ENCODE measurements at regions of chr7 and their contacts with region 1.

Region 1: GRCh38 chr7:123719197-123719721 is 29.5 kb downstream of the WASL start:
- DNase-seq: no peak
- H3K4me3 ChIP-seq: no peak overlapping the region
- H3K27ac ChIP-seq: no peak overlapping the region
- H3K4me1 ChIP-seq: peaks cover 0 to 5% (median 2%) of the 10 kb centered on the region in 4 experiments; a peak in 2 of 7 replicates
- H3K27me3 ChIP-seq: no peaks in the 10 kb centered on the region
- CTCF ChIP-seq: no peak
- EP300 ChIP-seq: no peak
- POLR2A ChIP-seq: no peak
- RAD21 ChIP-seq: no peak

Region 2: DNA sequence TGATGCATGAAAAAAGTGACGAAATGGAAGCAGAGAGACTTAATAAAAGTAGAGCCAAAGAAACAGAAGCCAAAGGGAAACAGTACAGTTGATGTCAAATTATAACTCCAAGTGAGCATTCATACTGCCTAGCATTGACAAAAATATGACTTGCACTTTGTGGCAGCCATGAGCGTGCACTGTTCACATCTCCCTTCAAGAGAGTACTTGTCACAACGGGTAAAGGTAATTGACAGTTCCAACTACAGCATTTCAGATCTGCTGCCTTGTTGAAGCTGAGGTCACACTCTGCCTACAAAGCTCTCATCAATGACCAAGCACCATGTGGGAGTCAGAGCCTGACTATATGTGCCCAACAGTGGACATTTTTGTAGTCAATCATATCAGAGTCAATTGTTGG is 239.2 kb before region 1 on chr7:
- CTCF ChIA-PET with region 1: no interaction called
- POLR2A ChIA-PET with region 1: no interaction called
- DNase-seq: no peak
- H3K4me3 ChIP-seq: no peak overlapping the region
- H3K27ac ChIP-seq: no peak overlapping the region
- H3K4me1 ChIP-seq: no peaks in the 10 kb centered on the region
- H3K27me3 ChIP-seq: peaks cover 0 to 1% (median 0%) of the 10 kb centered on the region in 4 experiments; a peak in 1 of 7 replicates
- CTCF ChIP-seq: no peak
- EP300 ChIP-seq: no peak
- POLR2A ChIP-seq: no peak
- RAD21 ChIP-seq: no peak

Region 3: GRCh38 chr7:123655614-123656013 is 63.6 kb before region 1 on chr7 and contains the start of gene LMOD2:
- CTCF ChIA-PET with region 1: no interaction called
- POLR2A ChIA-PET with region 1: no interaction called
- DNase-seq: no peak
- H3K4me3 ChIP-seq: no peak within 1 kb of the TSS
- H3K27ac ChIP-seq: no peak within 1 kb of the TSS
- H3K4me1 ChIP-seq: no peaks in the 10 kb centered on the region
- H3K27me3 ChIP-seq: no peaks in the 10 kb centered on the region
- CTCF ChIP-seq: no peak
- EP300 ChIP-seq: no peak
- POLR2A ChIP-seq: no peak
- RAD21 ChIP-seq: no peak
- total RNA-seq, gene LMOD2: 0.22 TPM in 1 of 2 replicates, not detected in the other

Region 4: DNA sequence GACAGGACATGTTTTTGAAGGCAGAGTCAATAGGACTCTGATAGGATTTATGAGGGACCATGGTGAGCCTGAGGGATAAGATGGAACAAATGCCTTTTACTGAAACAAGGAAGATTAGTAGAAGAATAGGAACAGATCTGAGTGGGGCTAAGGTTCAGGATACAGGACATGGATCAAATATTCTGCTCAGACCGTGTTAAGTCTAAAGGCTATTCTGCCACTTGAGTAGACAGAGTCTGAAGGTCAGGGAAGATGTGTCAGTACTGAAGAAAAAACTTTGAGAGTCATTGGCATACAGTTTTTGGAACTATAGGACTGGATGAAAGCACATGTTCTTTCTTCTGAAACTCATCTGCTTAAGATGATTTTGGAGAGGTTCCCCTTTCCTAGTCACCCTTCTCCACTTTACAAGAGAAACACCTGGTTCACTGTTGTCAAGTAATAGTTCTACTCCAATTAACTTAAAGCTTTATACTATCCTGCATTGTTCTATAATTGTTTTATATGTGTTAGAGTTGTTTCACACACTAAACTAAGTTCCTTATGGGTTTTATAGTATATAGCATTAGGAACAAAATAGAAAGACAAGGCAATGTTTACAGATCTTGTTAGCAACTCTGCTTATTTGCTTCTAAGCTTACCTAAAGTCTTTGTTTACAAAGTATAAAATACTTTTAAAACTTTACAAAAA is 13.9 kb before region 1 on chr7:
- CTCF ChIA-PET with region 1: interaction called, 12 read pairs
- POLR2A ChIA-PET with region 1: no interaction called
- DNase-seq: no peak
- H3K4me3 ChIP-seq: no peak overlapping the region
- H3K27ac ChIP-seq: no peak overlapping the region
- H3K4me1 ChIP-seq: no peaks in the 10 kb centered on the region; a peak in 1 of 7 replicates
- H3K27me3 ChIP-seq: no peaks in the 10 kb centered on the region
- CTCF ChIP-seq: no peak
- EP300 ChIP-seq: no peak
- POLR2A ChIP-seq: no peak
- RAD21 ChIP-seq: no peak

Region 5: GRCh38 chr7:123734498-123734897 is 15.2 kb after region 1 on chr7:
- CTCF ChIA-PET with region 1: interaction called, 14 read pairs
- POLR2A ChIA-PET with region 1: interaction called, 3 read pairs
- DNase-seq: no peak
- H3K4me3 ChIP-seq: no peak overlapping the region
- H3K27ac ChIP-seq: no peak overlapping the region
- H3K4me1 ChIP-seq: no peaks in the 10 kb centered on the region
- H3K27me3 ChIP-seq: no peaks in the 10 kb centered on the region
- CTCF ChIP-seq: no peak
- EP300 ChIP-seq: no peak
- POLR2A ChIP-seq: no peak
- RAD21 ChIP-seq: no peak

Region 6: GRCh38 chr7:123748734-123749536 is 29.7 kb after region 1 on chr7 and contains the start of gene WASL:
- CTCF ChIA-PET with region 1: interaction called, 7 read pairs
- POLR2A ChIA-PET with region 1: interaction called, 19 read pairs
- DNase-seq: peak; percentile 69 to 95
- H3K4me3 ChIP-seq: peak within 1 kb of the TSS; percentile 95 to 99 (median 97)
- H3K27ac ChIP-seq: peak within 1 kb of the TSS; percentile 89
- H3K4me1 ChIP-seq: peaks cover 0 to 18% (median 2%) of the 10 kb centered on the region in 4 experiments; a peak in 3 of 7 replicates
- H3K27me3 ChIP-seq: no peaks in the 10 kb centered on the region
- CTCF ChIP-seq: 0 out of 4 replicates have a peak, but pooled peaks of 1 of the 3 experiments have one; percentile 18
- EP300 ChIP-seq: peak in 1 of 2 experiments; percentile 99; a peak in 2 of 3 replicates
- POLR2A ChIP-seq: peak; percentile 96 to 99
- RAD21 ChIP-seq: no peak
- total RNA-seq, gene WASL: 37.1 and 38.9 TPM in 2 replicates

Region 7: DNA sequence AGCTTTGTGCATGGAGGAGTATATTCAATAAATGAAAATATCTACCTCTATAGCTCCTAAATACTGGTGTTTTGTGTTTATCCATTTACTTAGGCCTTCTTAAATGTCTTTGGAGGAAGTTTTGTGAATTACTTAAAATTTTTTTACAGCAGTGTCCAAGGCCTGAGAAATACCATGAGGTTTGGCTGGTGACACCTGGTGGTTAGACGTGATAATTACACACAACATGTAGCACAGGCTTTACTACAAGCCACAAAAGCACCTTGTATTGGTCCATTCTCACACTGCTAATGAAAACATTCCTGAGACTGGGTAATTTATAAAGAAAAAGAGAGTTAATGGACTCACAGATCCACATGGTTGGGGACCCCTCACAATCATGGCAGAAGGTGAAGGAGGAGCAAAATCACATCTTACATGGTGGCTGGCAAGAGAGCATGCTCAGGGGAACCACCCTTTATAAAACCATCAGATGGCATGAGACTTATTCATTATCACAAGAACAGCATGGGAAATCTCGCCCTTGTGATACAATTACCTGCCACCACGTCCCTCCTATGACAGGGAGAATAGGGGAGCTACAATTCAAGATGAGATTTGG is 146.4 kb after region 1 on chr7:
- CTCF ChIA-PET with region 1: interaction called, 12 read pairs
- POLR2A ChIA-PET with region 1: no interaction called
- DNase-seq: no peak
- H3K4me3 ChIP-seq: no peak overlapping the region
- H3K27ac ChIP-seq: no peak overlapping the region
- H3K4me1 ChIP-seq: peaks cover 0 to 2% (median 1%) of the 10 kb centered on the region in 4 experiments; a peak in 1 of 7 replicates
- H3K27me3 ChIP-seq: no peaks in the 10 kb centered on the region
- CTCF ChIP-seq: peak in 2 of 3 experiments; percentile 61 to 68; a peak in 3 of 4 replicates
- EP300 ChIP-seq: no peak
- POLR2A ChIP-seq: no peak
- RAD21 ChIP-seq: peak; percentile 68 to 69